ENCODE measurements at regions of chr17 and their contacts with region 1.

Region 1: DNA sequence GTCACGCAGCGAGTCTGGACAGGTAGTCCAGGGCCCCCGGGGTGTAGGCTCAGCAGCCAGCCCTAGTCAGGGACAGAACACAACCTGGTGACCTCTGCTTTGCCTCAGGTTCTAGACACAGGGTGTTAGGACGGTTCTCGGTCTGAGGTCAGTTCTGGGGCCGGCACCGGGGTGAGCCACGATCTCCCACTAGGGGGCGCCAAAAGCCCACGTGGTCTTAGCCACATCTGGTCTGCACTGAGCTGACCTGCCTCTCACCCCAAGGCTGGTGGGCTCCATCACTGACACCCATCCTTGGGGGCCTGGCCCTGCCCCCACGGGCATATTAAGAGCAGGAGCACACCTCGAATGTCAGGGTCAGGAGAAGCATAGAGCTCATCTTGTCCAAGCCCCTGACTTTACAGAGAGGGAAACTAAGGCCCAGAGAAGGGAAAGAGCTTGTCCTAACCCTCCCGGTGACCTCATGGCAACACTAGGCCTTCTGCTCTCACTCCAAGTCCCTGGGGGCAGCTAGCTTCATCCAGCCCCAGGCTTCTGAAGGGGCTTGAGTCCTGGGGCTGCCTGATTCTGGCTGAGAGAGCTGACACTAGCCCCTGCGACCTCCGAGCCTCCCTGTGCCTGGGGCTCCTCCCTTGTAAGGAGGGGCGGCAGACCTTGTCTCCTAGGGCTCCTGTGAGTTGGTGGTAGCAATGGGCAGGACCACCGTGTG is 9.0 kb downstream of the SLC5A10 start:
- DNase-seq: peak; percentile 86
- H3K4me3 Mint-ChIP-seq: no peak overlapping the region
- H3K27ac Mint-ChIP-seq: no peak overlapping the region
- H3K4me1 Mint-ChIP-seq: peaks cover 23% of the 10 kb centered on the region
- H3K27me3 Mint-ChIP-seq: no peaks in the 10 kb centered on the region

Region 2: DNA sequence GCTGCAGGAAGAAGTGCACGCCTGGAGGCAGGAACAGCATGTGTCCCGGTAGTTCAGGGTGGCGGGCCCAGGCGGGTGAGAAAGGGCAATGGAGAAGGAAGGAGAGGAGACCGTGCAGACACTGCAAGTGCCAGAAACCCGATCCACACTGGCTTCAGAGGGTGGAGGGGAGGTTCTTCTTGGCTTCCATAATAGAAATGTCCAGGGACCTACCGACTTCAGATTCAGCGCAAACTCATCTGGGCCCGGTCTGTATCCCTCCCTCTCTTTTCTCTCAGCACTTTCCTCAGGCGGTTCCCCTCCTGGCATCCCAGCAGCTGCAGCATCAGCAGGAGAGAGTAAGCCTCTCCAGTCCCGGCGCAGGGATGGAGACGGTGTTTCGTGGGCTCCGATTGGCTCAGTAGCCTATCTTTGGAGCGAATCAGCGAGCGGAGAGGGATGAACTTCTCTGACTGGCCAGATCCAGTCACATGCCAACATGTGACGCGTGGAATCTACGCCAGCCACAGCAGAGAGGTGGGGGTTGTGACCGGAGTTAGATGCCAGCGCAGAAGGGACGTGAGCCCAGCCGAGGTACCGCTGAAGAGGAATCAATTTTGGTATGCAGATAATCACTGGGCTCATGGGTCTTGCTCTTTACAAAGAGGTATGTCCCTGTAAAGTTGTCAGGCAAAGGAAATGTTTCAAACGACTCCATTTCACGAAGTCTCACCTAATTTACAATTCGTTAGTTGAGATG is 105.0 kb before region 1 on chr17:
- CTCF ChIA-PET with region 1: interaction called, 12 read pairs
- intact Hi-C with region 1: no loop called
- DNase-seq: peak; percentile 95
- H3K4me3 Mint-ChIP-seq: peak overlapping the region; percentile 86
- H3K27ac Mint-ChIP-seq: peak overlapping the region; percentile 73
- H3K4me1 Mint-ChIP-seq: peaks cover 38% of the 10 kb centered on the region
- H3K27me3 Mint-ChIP-seq: no peaks in the 10 kb centered on the region

Region 3: DNA sequence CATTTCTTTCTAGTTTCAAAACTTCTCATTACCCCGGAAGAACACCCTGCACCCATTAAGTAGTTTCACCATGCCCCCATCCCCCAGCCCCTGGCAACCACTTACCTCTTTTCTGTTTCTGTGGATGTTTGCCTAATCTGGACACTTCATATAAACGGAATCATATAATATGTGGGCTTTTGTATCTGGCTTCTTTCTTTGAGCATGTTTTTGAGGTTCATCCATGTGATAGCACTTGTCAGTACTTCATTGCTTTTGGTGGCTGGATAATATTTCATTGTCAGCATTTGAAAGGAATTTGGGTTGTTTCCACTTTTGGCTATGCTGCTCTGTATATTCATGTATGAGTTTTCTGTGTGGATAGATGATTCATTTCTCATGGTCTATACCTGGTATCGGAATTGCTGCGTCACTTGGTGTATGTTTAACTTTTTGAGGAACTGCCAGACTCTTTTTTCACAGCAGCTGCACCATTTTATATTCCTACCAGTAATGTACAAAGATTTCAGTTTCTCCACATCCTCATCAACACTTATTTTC is 39.0 kb before region 1 on chr17:
- CTCF ChIA-PET with region 1: interaction called, 10 read pairs
- intact Hi-C with region 1: no loop called
- DNase-seq: peak; percentile 36
- H3K4me3 Mint-ChIP-seq: no peak overlapping the region
- H3K27ac Mint-ChIP-seq: peak overlapping the region; percentile 27
- H3K4me1 Mint-ChIP-seq: peaks cover 70% of the 10 kb centered on the region
- H3K27me3 Mint-ChIP-seq: no peaks in the 10 kb centered on the region

Region 4: GRCh38 chr17:19004421-19005136 is 43.6 kb after region 1 on chr17 and contains the start of gene FAM83G:
- CTCF ChIA-PET with region 1: interaction called, 13 read pairs
- intact Hi-C with region 1: no loop called
- DNase-seq: peak; percentile 92
- H3K4me3 Mint-ChIP-seq: peak within 1 kb of the TSS; percentile 91
- H3K27ac Mint-ChIP-seq: peak within 1 kb of the TSS; percentile 87
- H3K4me1 Mint-ChIP-seq: peaks cover 31% of the 10 kb centered on the region
- H3K27me3 Mint-ChIP-seq: no peaks in the 10 kb centered on the region
- total RNA-seq, gene FAM83G: 10.6 TPM

Region 5: GRCh38 chr17:19024101-19025078 is 63.4 kb after region 1 on chr17:
- CTCF ChIA-PET with region 1: interaction called, 32 read pairs
- intact Hi-C with region 1: no loop called
- DNase-seq: peak; percentile 53
- H3K4me3 Mint-ChIP-seq: peak overlapping the region; percentile 2
- H3K27ac Mint-ChIP-seq: peak overlapping the region; percentile 77
- H3K4me1 Mint-ChIP-seq: peaks cover 13% of the 10 kb centered on the region
- H3K27me3 Mint-ChIP-seq: no peaks in the 10 kb centered on the region

Region 6: GRCh38 chr17:19346351-19347255 is 385.6 kb after region 1 on chr17:
- CTCF ChIA-PET with region 1: no interaction called
- intact Hi-C with region 1: no loop called
- DNase-seq: no peak
- H3K4me3 Mint-ChIP-seq: no peak overlapping the region
- H3K27ac Mint-ChIP-seq: no peak overlapping the region
- H3K4me1 Mint-ChIP-seq: no peaks in the 10 kb centered on the region
- H3K27me3 Mint-ChIP-seq: peaks cover 6% of the 10 kb centered on the region

Measured in activated naive CD4-positive, alpha-beta T cell treated with anti-CD3 and anti-CD28 coated beads for 36 hours (primary cell).